Naive thymus-derived CD4-positive, alpha-beta T cell (primary cell): ENCODE measurements at regions of chr16 and their contacts with region 1.

Region 1: DNA sequence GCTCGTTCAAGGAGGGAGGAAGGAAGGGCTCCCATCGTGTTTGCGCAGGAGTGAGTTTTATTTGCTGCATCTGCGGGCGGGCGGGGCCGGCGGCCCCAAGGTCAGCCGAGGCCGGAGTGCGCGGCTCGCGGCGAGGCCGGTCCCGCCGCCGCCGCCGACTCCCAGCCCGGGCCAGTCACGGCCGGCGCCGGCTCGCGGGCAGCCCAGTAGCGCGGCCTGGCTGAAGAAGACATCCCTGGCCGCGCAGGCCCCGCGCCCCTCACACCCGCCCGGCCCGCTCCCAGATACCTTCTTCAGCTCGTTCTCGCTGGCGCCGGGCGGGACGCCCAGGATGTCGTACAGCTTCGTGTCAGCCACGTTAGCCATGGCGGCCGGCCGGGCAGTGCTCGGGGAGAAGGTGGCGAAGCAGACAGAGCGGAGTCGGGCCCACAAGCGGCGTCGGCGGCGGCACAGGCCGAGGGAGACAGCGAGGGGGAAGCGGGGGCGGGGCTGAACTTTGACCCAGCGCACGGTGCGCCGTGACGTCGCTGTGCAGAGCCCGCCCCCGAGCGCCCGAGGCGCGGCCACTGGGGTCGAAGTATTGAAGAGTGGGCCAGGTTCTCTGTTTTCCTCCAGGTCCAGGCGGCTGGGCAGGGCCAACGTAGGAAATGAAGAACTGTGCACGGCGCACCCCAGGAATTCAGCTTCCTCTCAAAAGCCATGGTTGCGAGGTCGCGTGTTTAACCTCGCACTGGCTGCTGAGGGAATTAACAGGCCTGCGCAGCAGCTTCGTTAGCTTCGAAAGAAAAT is at the start of gene DNAJA2:
- DNase-seq: peak; percentile 86 to 95 (median 92)
- ATAC-seq: peak; percentile 98
- H3K4me3 ChIP-seq: peak within 1 kb of the TSS; percentile 81
- H3K4me3 Mint-ChIP-seq: peak within 1 kb of the TSS; percentile 88 to 98 (median 95)
- H3K27ac ChIP-seq: peak within 1 kb of the TSS; percentile 93
- H3K27ac Mint-ChIP-seq: peak within 1 kb of the TSS; percentile 87 to 100 (median 99)
- H3K4me1 ChIP-seq: peaks cover 26 to 33% of the 10 kb centered on the region in 2 donors
- H3K4me1 Mint-ChIP-seq: peaks cover 27 to 70% (median 51%) of the 10 kb centered on the region in 7 donors
- H3K27me3 ChIP-seq: no peaks in the 10 kb centered on the region
- H3K27me3 Mint-ChIP-seq: no peaks in the 10 kb centered on the region
- total RNA-seq, gene DNAJA2: 59.4 to 73.3 (median 60.9) TPM

Region 2: DNA sequence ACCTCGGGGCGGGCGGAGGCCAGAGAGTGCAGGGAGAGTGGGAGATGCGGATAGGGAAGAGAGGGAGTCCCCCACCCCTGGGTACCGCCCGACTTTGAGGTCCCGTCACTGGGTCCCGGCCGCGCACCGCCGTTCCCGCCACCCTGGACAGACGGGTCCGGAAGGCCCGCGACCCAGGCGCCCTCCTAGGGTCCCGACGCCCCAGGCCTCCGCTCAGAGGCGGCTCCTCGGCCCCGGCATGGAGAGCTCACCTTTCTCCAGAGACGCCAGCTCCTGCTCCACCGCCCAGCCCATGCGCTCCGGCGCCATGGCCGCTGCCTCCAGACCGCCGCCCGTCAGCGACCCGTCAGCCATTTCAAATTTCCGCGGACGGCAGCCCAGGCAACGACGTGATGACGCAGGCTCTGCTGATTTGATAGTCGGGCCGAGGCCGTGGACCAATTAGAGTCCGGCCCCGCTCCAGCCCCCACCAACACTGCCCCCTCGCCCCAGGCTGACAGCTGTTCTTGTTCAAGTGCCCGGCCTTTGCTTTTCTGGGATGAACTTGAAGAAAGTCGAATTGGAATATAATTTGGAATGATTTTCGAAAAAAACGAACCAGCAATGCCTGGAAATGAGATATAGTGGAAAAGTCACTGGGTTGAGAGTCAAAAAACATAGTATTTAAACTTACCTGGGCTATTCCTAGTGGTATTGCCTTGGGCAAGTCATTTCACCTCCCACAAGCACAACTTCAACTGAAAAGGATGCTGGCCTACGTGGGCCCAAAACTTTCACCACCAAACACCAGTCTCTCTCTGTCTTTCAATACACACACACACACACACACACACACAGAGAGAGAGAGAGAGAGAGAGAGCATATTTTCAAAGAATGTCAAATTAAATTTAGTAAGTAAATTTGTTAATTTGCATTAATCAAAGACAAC is 352.1 kb before region 1 on chr16 and contains the start of gene SHCBP1:
- CTCF ChIA-PET with region 1: no interaction called
- POLR2A ChIA-PET with region 1: no interaction called
- intact Hi-C with region 1: loop called in 1 of 2 experiments (anchors 2 kb)
- DNase-seq: peak; percentile 10 to 82 (median 34)
- ATAC-seq: peak; percentile 87
- H3K4me3 ChIP-seq: peak within 1 kb of the TSS; percentile 62
- H3K4me3 Mint-ChIP-seq: peak within 1 kb of the TSS; percentile 83 to 98 (median 88)
- H3K27ac ChIP-seq: no peak within 1 kb of the TSS
- H3K27ac Mint-ChIP-seq: peak within 1 kb of the TSS in 6 of 9 donors; percentile 8 to 98 (median 56)
- H3K4me1 ChIP-seq: peaks cover 3% of the 10 kb centered on the region in 2 donors
- H3K4me1 Mint-ChIP-seq: peaks cover 13 to 34% (median 22%) of the 10 kb centered on the region in 7 donors
- H3K27me3 ChIP-seq: no peaks in the 10 kb centered on the region
- H3K27me3 Mint-ChIP-seq: peaks cover 0 to 13% (median 0%) of the 10 kb centered on the region in 5 donors
- total RNA-seq, gene SHCBP1: 0.32 to 37.8 (median 1.1) TPM

Region 3: DNA sequence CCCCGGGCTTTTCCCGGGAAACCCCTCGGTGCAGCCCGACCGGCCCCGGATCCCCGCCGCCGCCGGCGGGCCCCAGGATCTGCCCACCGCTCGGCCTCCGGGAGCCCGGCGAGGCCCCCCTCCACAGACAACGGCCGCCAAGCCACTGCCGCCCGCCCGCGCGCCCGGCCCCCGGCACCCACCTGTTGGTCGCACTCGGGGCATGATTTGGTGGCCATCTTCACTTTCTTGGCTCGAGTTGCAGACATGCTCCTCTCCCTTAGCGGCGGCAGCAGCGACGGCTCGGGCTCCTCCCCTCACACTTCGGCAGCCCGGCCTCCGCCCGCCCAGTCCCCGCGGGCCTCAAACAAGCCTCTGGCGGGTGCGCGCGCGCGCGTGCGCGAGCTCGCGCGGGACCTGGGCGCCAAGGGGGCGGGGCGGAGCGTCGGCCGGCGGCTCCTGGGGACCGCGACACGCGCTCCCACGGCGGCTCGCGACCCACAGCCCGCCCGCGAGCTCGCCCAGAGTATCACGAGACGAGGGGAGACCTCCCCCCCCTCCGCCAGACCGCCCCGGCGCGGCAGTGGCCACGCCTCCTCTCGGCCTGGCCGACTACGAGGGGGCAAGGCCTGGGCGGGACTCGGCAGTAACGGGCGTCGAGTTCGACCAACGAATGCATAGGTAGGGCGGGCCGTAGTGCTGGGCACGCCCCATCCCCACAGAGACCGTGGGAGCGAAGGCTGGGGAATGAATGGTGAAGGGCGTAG is 142.3 kb before region 1 on chr16 and contains the start of gene C16orf87:
- CTCF ChIA-PET with region 1: no interaction called
- POLR2A ChIA-PET with region 1: interaction called, 26 read pairs
- intact Hi-C with region 1: loop called (anchors 1 kb)
- DNase-seq: peak; percentile 88 to 95 (median 91)
- ATAC-seq: peak; percentile 96
- H3K4me3 ChIP-seq: peak within 1 kb of the TSS; percentile 46
- H3K4me3 Mint-ChIP-seq: peak within 1 kb of the TSS; percentile 94 to 99 (median 96)
- H3K27ac ChIP-seq: peak within 1 kb of the TSS; percentile 81
- H3K27ac Mint-ChIP-seq: peak within 1 kb of the TSS; percentile 90 to 98 (median 95)
- H3K4me1 ChIP-seq: peaks cover 9 to 12% of the 10 kb centered on the region in 2 donors
- H3K4me1 Mint-ChIP-seq: peaks cover 21 to 35% (median 29%) of the 10 kb centered on the region in 7 donors
- H3K27me3 ChIP-seq: no peaks in the 10 kb centered on the region
- H3K27me3 Mint-ChIP-seq: peaks cover 0 to 21% (median 0%) of the 10 kb centered on the region in 5 donors
- total RNA-seq, gene C16orf87: 5.6 to 14.0 (median 12.7) TPM

Region 4: GRCh38 chr16:46961373-46962353 is 11.7 kb before region 1 on chr16:
- CTCF ChIA-PET with region 1: no interaction called
- POLR2A ChIA-PET with region 1: interaction called, 22 read pairs
- intact Hi-C with region 1: loop called in 1 of 2 experiments (anchors 1 kb)
- DNase-seq: no peak
- ATAC-seq: peak; percentile 87
- H3K4me3 ChIP-seq: no peak overlapping the region
- H3K4me3 Mint-ChIP-seq: peak overlapping the region in 6 of 10 donors; percentile 3 to 35 (median 16)
- H3K27ac ChIP-seq: peak overlapping the region; percentile 30
- H3K27ac Mint-ChIP-seq: peak overlapping the region in 8 of 9 donors; percentile 48 to 75 (median 72)
- H3K4me1 ChIP-seq: peaks cover 0 to 15% of the 10 kb centered on the region in 2 donors
- H3K4me1 Mint-ChIP-seq: peaks cover 19 to 49% (median 32%) of the 10 kb centered on the region in 7 donors
- H3K27me3 ChIP-seq: no peaks in the 10 kb centered on the region
- H3K27me3 Mint-ChIP-seq: no peaks in the 10 kb centered on the region

Region 5: GRCh38 chr16:47358816-47359215 is 385.4 kb after region 1 on chr16:
- CTCF ChIA-PET with region 1: no interaction called
- POLR2A ChIA-PET with region 1: no interaction called
- intact Hi-C with region 1: no loop called
- DNase-seq: no peak
- ATAC-seq: no peak
- H3K4me3 ChIP-seq: no peak overlapping the region
- H3K4me3 Mint-ChIP-seq: no peak overlapping the region
- H3K27ac ChIP-seq: no peak overlapping the region
- H3K27ac Mint-ChIP-seq: no peak overlapping the region
- H3K4me1 ChIP-seq: no peaks in the 10 kb centered on the region
- H3K4me1 Mint-ChIP-seq: peaks cover 0 to 2% (median 0%) of the 10 kb centered on the region in 7 donors
- H3K27me3 ChIP-seq: no peaks in the 10 kb centered on the region
- H3K27me3 Mint-ChIP-seq: no peaks in the 10 kb centered on the region

Region 6: GRCh38 chr16:47460711-47461597 is 487.6 kb after region 1 on chr16 and contains the starts of genes ITFG1 and PHKB:
- CTCF ChIA-PET with region 1: no interaction called
- POLR2A ChIA-PET with region 1: interaction called, 9 read pairs
- intact Hi-C with region 1: loop called (anchors 1 to 2 kb)
- DNase-seq: peak; percentile 94 to 98 (median 97)
- ATAC-seq: peak; percentile 97
- H3K4me3 ChIP-seq: peak within 1 kb of the TSS; percentile 94
- H3K4me3 Mint-ChIP-seq: peak within 1 kb of the TSS; percentile 91 to 100 (median 96)
- H3K27ac ChIP-seq: peak within 1 kb of the TSS; percentile 95
- H3K27ac Mint-ChIP-seq: peak within 1 kb of the TSS; percentile 91 to 99 (median 96)
- H3K4me1 ChIP-seq: peaks cover 10 to 21% of the 10 kb centered on the region in 2 donors
- H3K4me1 Mint-ChIP-seq: peaks cover 45 to 79% (median 73%) of the 10 kb centered on the region in 7 donors
- H3K27me3 ChIP-seq: no peaks in the 10 kb centered on the region
- H3K27me3 Mint-ChIP-seq: no peaks in the 10 kb centered on the region
- total RNA-seq, gene ITFG1: 21.7 to 34.3 (median 29.8) TPM
- total RNA-seq, gene PHKB: 48.5 to 82.9 (median 50.7) TPM

Region 7: GRCh38 chr16:48244080-48244862 is 1270.9 kb after region 1 on chr16 and contains the start of gene LONP2:
- CTCF ChIA-PET with region 1: no interaction called
- POLR2A ChIA-PET with region 1: interaction called, 3 read pairs
- intact Hi-C with region 1: loop called (anchors 1 kb)
- DNase-seq: peak; percentile 79 to 97 (median 93)
- ATAC-seq: peak; percentile 99
- H3K4me3 ChIP-seq: peak within 1 kb of the TSS; percentile 78
- H3K4me3 Mint-ChIP-seq: peak within 1 kb of the TSS; percentile 93 to 100 (median 96)
- H3K27ac ChIP-seq: peak within 1 kb of the TSS; percentile 78
- H3K27ac Mint-ChIP-seq: peak within 1 kb of the TSS; percentile 89 to 98 (median 96)
- H3K4me1 ChIP-seq: peaks cover 25 to 27% of the 10 kb centered on the region in 2 donors
- H3K4me1 Mint-ChIP-seq: peaks cover 29 to 56% (median 45%) of the 10 kb centered on the region in 7 donors
- H3K27me3 ChIP-seq: no peaks in the 10 kb centered on the region
- H3K27me3 Mint-ChIP-seq: no peaks in the 10 kb centered on the region
- total RNA-seq, gene LONP2: 62.3 to 124 (median 83.0) TPM

Region 8: GRCh38 chr16:48385272-48386150 is 1412.1 kb after region 1 on chr16 and contains the start of gene SIAH1:
- CTCF ChIA-PET with region 1: no interaction called
- POLR2A ChIA-PET with region 1: interaction called, 7 read pairs
- intact Hi-C with region 1: loop called in 1 of 2 experiments (anchors 2 kb)
- DNase-seq: peak; percentile 79 to 95 (median 89)
- ATAC-seq: peak; percentile 95
- H3K4me3 ChIP-seq: peak within 1 kb of the TSS; percentile 88
- H3K4me3 Mint-ChIP-seq: peak within 1 kb of the TSS; percentile 90 to 98 (median 94)
- H3K27ac ChIP-seq: peak within 1 kb of the TSS; percentile 94
- H3K27ac Mint-ChIP-seq: peak within 1 kb of the TSS; percentile 80 to 97 (median 94)
- H3K4me1 ChIP-seq: peaks cover 12 to 16% of the 10 kb centered on the region in 2 donors
- H3K4me1 Mint-ChIP-seq: peaks cover 18 to 39% (median 31%) of the 10 kb centered on the region in 7 donors
- H3K27me3 ChIP-seq: no peaks in the 10 kb centered on the region
- H3K27me3 Mint-ChIP-seq: peaks cover 0 to 5% (median 0%) of the 10 kb centered on the region in 5 donors
- total RNA-seq, gene SIAH1: 14.5 to 51.1 (median 19.8) TPM